ENCODE measurements at regions of chr7 and their contacts with region 1.

Region 1: DNA sequence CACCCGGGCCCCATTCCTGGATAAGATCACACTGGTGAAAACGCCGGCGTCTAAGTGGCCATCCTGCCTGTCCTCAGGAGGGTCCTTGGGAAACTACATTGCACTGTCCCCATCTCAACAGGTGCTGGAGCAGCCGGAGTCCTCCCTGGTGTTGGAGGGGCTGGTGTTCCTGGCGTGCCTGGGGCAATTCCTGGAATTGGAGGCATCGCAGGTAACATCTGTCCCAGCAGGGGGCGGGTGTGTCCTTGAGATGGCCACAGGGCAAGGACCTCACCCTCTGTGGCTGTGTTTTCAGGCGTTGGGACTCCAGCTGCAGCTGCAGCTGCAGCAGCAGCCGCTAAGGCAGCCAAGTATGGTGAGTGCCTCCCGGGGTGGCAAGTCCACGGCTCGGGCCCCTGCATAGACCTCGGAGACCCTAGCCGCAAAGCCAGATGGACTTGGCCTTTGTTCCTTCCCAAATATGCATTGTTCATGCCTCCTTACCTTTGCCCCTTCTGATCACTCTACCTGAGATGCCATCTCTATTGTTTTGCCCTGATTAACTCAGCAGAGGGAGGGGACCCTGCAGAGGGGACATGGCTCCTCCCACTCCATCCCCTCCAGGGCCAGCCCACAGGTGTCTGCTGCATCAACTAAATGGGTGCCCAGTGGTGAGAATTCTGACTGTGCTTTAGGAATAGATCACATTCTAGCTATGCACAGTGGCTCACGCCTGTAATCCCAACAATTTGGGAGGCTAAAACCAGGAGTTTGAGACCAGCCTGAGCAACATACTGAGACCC is 23.8 kb downstream of the ELN start:
- DNase-seq: no peak
- ATAC-seq: no peak
- H3K4me3 ChIP-seq: no peak overlapping the region
- H3K4me3 Mint-ChIP-seq: no peak overlapping the region
- H3K27ac ChIP-seq: no peak overlapping the region
- H3K27ac Mint-ChIP-seq: no peak overlapping the region
- H3K4me1 ChIP-seq: no peaks in the 10 kb centered on the region
- H3K4me1 Mint-ChIP-seq: no peaks in the 10 kb centered on the region
- H3K27me3 ChIP-seq: no peaks in the 10 kb centered on the region
- H3K27me3 Mint-ChIP-seq: peaks cover 7% of the 10 kb centered on the region
- CTCF ChIP-seq: no peak

Region 2: GRCh38 chr7:74141705-74142104 is 89.9 kb after region 1 on chr7:
- CTCF ChIA-PET with region 1: no interaction called
- POLR2A ChIA-PET with region 1: no interaction called
- intact Hi-C with region 1: loop called in 1 of 2 experiments (anchors 10 kb)
- DNase-seq: no peak
- ATAC-seq: no peak
- H3K4me3 ChIP-seq: no peak overlapping the region
- H3K4me3 Mint-ChIP-seq: no peak overlapping the region
- H3K27ac ChIP-seq: no peak overlapping the region
- H3K27ac Mint-ChIP-seq: no peak overlapping the region
- H3K4me1 ChIP-seq: no peaks in the 10 kb centered on the region
- H3K4me1 Mint-ChIP-seq: peaks cover 3% of the 10 kb centered on the region
- H3K27me3 ChIP-seq: no peaks in the 10 kb centered on the region
- H3K27me3 Mint-ChIP-seq: no peaks in the 10 kb centered on the region
- CTCF ChIP-seq: no peak

Measured in CD8-positive, alpha-beta T cell (primary cell).